AG04449 (cell line): ENCODE measurements at regions of chr5 and their contacts with region 1.

Region 1: GRCh38 chr5:79020861-79021561 is 35.9 kb upstream of the ARSB start:
- DNase-seq: peak; percentile 41
- H3K4me3 ChIP-seq: peak overlapping the region; percentile 21; the same call in 1 of the 2 replicates
- CTCF ChIP-seq: peak; percentile 75

Region 2: GRCh38 chr5:78984439-78985115 is 36.4 kb before region 1 on chr5:
- CTCF ChIA-PET with region 1: interaction called, 80 read pairs
- POLR2A ChIA-PET with region 1: interaction called, 16 read pairs
- DNase-seq: no peak
- H3K4me3 ChIP-seq: peak overlapping the region; percentile 73
- CTCF ChIP-seq: peak; percentile 64

Region 3: DNA sequence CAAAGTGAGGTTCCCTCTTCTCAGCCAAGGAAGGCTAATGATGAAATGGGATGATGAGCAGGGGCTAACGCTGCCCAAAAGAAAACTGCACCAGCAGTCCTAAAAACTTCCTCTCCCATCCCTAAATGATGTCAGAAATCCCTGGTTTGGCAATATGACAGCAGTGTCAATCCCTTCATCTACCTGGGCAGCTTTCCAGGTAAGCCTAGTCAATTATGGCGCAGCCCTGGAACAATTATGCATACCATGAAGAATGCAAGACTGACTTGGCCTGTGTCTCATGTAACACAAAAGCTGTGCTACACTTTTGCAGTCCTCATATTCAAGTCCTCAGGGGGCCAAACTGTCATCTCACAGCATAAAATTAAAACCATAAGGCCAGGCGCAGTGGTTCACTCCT is 41.4 kb after region 1 on chr5:
- CTCF ChIA-PET with region 1: interaction called, 16 read pairs
- POLR2A ChIA-PET with region 1: no interaction called
- DNase-seq: no peak
- H3K4me3 ChIP-seq: no peak overlapping the region
- CTCF ChIP-seq: no peak

Region 4: DNA sequence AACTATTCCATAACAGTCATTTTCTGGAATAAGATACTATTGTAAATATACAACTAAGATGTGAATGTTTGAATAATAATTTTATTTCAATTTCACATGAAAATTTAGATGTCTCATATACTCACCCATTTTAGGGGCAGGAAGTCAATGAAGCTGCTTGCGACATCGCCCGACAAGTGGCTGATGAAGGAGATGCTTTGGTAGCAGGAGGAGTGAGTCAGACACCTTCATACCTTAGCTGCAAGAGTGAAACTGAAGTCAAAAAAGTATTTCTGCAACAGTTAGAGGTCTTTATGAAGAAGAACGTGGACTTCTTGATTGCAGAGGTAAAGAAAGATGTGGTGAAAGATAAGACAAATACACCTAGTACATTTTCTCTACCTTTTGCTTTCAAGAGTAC is 99.2 kb after region 1 on chr5:
- CTCF ChIA-PET with region 1: interaction called, 648 read pairs
- POLR2A ChIA-PET with region 1: no interaction called
- DNase-seq: no peak
- H3K4me3 ChIP-seq: no peak overlapping the region
- CTCF ChIP-seq: no peak

Region 5: GRCh38 chr5:79235634-79236363 is 214.8 kb after region 1 on chr5 and contains the start of gene JMY:
- CTCF ChIA-PET with region 1: interaction called, 14 read pairs
- POLR2A ChIA-PET with region 1: no interaction called
- DNase-seq: no peak
- H3K4me3 ChIP-seq: peak within 1 kb of the TSS; percentile 79
- CTCF ChIP-seq: peak; percentile 32

Region 6: DNA sequence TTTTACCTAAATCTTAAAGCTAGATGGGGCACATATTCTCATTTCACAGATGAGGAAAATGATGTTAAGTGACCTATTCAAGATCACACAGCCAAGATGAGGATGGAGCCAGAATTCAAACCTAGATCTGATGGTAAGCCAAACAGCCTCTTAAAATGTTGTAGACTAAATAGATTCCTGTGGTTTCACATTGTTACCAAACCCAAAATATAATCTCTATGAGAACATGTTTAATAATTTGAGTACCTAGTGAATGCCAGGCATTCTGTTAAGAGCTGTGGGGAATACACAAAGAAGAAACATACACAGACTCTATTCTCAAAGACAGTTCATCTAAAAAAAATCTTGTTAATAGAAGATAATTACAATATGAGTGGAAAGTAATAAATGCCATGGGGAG is 467.8 kb after region 1 on chr5:
- CTCF ChIA-PET with region 1: interaction called, 10 read pairs
- POLR2A ChIA-PET with region 1: no interaction called
- DNase-seq: no peak
- H3K4me3 ChIP-seq: no peak overlapping the region
- CTCF ChIP-seq: no peak

Region 7: GRCh38 chr5:80083101-80083890 is 1062.3 kb after region 1 on chr5:
- CTCF ChIA-PET with region 1: interaction called, 37 read pairs
- POLR2A ChIA-PET with region 1: no interaction called
- DNase-seq: no peak
- H3K4me3 ChIP-seq: peak overlapping the region; percentile 26
- CTCF ChIP-seq: peak; percentile 59